ENCODE measurements at regions of chr2 and their contacts with region 1.

Region 1: DNA sequence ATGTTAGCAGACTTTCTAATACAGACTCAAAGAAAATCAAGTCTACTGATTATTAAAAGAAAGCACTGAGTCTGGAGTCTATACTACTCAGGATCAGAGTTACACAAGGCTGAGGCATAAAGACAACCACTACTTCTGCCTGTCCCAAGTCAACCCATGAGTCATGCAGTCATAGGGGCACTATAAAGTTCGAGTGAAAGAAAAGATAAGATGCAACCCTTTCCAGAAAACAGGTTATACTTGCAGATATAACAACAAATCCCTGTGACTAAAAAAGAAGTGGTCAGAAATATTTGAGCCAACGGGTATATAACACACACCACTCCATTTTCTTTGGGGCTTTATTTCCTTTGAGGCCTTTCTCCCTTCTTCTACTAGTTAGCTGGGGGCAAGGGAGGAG is 18.6 kb upstream of the SCRN3 start:
- DNase-seq: peak; percentile 62
- ATAC-seq: peak; percentile 71
- H3K4me3 ChIP-seq: no peak overlapping the region
- H3K27ac ChIP-seq: no peak overlapping the region
- H3K4me1 ChIP-seq: 0 out of 2 replicates have a peak, but pooled peaks cover 7% of the 10 kb centered on the region
- H3K27me3 ChIP-seq: no peaks in the 10 kb centered on the region
- CTCF ChIP-seq: no peak

Region 2: DNA sequence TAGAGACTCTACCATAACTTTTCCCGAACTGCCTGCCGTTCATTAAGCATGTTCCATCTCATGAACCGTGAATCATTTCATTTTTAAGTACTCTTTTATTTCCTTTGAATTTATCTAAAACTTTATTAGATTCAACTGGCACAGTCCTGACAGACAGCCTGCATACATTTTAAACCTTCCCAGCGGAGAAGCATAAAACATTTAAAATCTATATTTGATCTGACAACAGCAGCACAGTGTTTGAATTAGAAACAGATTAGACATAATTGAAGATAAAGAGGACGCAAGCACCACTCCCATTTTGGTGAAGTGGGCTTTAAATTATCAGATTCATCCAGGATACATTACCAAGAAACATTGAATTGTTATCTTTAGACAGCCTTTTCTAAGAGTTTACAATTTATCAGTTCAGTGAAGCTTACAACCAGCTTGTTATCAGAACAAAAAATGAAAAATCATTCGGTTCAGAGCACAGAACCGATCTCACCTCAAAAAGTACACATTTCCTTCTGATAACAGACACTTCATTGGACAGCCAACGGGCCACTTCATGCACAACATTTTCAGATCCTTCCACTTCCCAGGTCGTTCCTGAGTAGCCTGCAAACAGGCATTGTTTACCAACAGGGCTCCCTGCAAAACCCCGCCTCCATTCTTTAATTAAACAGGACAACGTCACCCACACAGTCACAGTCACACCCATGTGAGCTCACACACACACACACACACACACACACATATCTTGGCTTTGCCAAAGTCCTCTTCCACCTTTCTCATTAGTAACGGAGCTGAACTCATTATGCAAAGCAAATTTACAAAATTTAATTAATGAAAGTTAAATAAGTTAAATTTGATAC is 583.0 kb before region 1 on chr2:
- CTCF ChIA-PET with region 1: no interaction called
- POLR2A ChIA-PET with region 1: interaction called, 16 read pairs
- intact Hi-C with region 1: no loop called
- DNase-seq: no peak
- ATAC-seq: no peak
- H3K4me3 ChIP-seq: no peak overlapping the region
- H3K27ac ChIP-seq: no peak overlapping the region
- H3K4me1 ChIP-seq: no peaks in the 10 kb centered on the region
- H3K27me3 ChIP-seq: no peaks in the 10 kb centered on the region
- CTCF ChIP-seq: no peak

Region 3: DNA sequence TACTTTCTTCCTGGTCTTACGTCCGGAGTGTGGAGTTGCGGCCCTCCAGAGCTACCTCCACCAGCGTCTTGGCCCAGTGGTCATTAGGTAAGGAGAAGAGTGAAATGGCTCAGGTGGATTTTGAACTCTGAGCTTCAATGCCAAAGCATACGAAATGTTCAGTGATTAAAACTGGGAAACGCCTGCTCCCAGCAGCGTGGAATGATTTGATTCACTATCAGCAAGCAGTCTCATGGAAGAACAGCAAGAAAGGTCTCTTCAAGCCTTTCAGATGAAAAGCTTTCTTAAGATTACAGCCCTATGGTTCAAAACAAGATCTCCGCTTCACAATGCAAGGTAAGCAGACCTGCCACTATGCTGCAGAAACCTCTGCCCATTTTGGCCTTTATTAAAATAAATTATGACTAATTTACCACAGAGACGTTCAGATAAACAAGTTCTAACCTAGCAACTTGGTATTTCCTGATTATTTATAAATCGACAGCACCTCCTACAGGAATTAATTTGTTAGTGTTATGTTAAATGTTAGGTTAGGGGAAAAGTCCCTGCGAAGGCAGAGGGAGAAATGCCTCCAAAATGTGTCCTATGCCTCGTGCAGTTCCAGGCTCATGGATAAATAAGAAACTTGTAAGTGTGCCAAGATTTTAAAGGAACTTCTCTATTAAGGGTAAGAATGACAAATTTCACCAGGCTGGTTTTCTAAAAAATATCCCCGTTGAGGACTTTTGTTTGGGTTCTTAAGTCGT is 32.1 kb before region 1 on chr2:
- CTCF ChIA-PET with region 1: no interaction called
- POLR2A ChIA-PET with region 1: no interaction called
- intact Hi-C with region 1: no loop called
- DNase-seq: peak; percentile 89
- ATAC-seq: peak; percentile 61
- H3K4me3 ChIP-seq: peak overlapping the region; percentile 45; the same call in 1 of the 2 replicates
- H3K27ac ChIP-seq: no peak overlapping the region
- H3K4me1 ChIP-seq: peaks cover 23% of the 10 kb centered on the region
- H3K27me3 ChIP-seq: no peaks in the 10 kb centered on the region
- CTCF ChIP-seq: peak; percentile 77

Region 4: DNA sequence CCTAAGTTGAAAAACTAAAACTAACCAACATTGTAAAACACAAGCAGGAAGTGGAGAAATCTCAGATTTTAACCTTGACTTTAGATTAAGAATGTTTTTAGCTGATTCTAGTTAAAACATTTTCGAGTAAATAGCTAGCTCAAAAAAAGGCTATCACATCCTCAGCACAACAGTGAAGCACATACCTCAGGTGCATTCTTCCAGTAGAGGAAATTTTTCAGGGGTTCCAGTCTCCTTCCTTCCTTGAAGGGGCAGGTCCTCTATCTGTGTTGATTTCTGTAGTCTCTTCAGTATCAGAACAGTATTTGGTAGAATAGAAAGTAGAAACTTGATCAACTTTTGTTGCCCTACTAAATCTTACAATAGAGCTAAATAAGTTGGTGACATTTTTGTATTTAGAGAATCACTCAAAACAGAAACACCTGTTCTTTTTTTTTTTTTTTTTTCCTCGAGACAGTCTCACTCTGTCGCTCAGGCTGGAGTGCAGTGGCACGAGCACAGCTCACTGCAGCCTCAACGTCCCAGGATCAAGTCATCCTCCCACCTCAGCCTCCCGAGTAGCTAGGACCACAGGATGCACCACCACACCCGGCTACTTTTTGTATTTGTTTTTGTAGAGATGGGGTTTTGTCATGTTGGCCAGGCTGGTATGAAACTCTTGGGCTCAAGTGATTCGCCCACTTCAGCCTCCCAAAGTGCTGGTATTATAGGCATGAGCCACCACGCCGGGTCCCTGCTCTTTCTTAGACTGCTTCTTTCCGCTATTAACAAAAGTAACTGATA is 116.8 kb after region 1 on chr2:
- CTCF ChIA-PET with region 1: interaction called, 14 read pairs
- POLR2A ChIA-PET with region 1: no interaction called
- intact Hi-C with region 1: no loop called
- DNase-seq: no peak
- ATAC-seq: no peak
- H3K4me3 ChIP-seq: no peak overlapping the region
- H3K27ac ChIP-seq: no peak overlapping the region
- H3K4me1 ChIP-seq: no peaks in the 10 kb centered on the region
- H3K27me3 ChIP-seq: no peaks in the 10 kb centered on the region
- CTCF ChIP-seq: no peak

Region 5: DNA sequence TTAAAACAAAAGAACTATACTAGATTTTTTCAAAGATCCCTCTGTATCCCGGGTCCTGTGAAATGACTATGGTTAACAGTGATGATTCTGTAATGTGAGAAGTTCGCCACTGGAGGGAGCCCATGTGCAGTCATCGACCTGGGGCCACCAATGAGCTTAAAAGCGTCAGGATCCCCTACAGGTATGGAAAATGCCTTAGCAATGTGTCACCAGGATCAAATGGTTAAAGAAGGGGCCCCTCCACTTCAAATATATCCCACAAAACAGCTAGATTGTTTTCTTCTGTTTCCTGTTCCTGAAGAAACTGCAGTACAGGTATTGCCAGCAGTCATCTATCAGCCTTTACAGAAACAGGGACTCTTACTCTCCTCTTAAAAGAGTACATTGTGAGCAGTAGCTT is 372.0 kb after region 1 on chr2:
- CTCF ChIA-PET with region 1: no interaction called
- POLR2A ChIA-PET with region 1: no interaction called
- intact Hi-C with region 1: no loop called
- DNase-seq: peak; percentile 91
- ATAC-seq: peak; percentile 80
- H3K4me3 ChIP-seq: no peak overlapping the region
- H3K27ac ChIP-seq: no peak overlapping the region
- H3K4me1 ChIP-seq: peaks cover 20% of the 10 kb centered on the region
- H3K27me3 ChIP-seq: no peaks in the 10 kb centered on the region
- CTCF ChIP-seq: peak; percentile 88

Measured in PC-3 (cell line).